Endothelial cell of umbilical vein (primary cell): ENCODE measurements at regions of chr2 and their contacts with region 1.

Region 1: DNA sequence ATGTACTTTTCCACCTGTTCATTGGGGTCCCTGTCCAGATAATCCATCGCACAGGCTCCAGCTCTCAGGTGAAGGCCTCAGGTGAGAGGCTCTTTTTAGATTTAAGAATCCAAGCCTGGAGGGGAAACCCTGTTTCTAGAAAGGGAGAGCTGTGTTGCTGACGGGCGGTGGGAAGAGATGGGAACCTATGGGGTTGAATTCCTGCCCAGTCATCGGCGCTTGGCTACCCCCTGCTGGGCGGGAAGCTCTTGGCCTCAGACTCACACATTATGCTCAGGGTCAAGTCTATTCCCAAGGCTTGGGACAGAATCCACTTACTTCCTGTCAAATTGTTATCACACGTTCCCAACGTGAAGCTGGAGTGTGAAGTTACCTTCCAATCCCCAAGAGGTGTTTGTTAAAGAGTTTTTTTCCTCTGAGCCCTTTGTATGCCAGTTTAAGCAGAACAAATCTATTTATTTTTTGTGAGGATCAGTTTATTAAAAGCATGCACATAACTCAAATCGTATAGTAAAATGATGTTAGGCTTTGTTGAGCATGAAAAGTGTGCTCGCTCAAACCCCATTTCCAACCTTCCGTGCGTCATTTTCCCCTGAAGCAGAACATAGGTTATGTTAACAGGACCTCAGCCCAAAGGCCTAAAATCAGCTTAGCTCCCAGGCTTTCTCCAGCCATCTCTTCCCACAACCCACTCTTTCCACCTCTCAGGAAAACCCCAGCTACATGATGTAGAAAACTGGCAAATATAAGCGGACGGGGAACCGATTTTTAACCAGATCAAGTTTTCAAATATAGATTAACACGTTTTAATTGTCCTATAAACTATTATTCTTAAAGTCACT is 181.7 kb upstream of the ETAA1 start:
- DNase-seq: peak; percentile 77
- H3K4me3 ChIP-seq: no peak overlapping the region
- H3K27ac ChIP-seq: no peak overlapping the region
- H3K4me1 ChIP-seq: no peaks in the 10 kb centered on the region
- H3K27me3 ChIP-seq: no peaks in the 10 kb centered on the region
- CTCF ChIP-seq: peak; percentile 74 to 85
- POLR2A ChIP-seq: no peak

Region 2: GRCh38 chr2:65640793-65641103 is 1574.7 kb before region 1 on chr2:
- CTCF ChIA-PET with region 1: interaction called, 21 read pairs
- POLR2A ChIA-PET with region 1: no interaction called
- dilution Hi-C with region 1: no loop called
- intact Hi-C with region 1: loop called (anchors 1 kb)
- DNase-seq: no peak
- H3K4me3 ChIP-seq: no peak overlapping the region
- H3K27ac ChIP-seq: no peak overlapping the region
- H3K4me1 ChIP-seq: no peaks in the 10 kb centered on the region
- H3K27me3 ChIP-seq: peaks cover 12 to 15% of the 10 kb centered on the region in 2 experiments
- CTCF ChIP-seq: no peak
- POLR2A ChIP-seq: no peak

Region 3: GRCh38 chr2:66574701-66575624 is 640.5 kb before region 1 on chr2:
- CTCF ChIA-PET with region 1: interaction called, 9 read pairs
- POLR2A ChIA-PET with region 1: no interaction called
- dilution Hi-C with region 1: no loop called
- intact Hi-C with region 1: loop called (anchors 1 kb)
- DNase-seq: peak; percentile 81
- H3K4me3 ChIP-seq: peak overlapping the region; percentile 56 to 92 (median 85)
- H3K27ac ChIP-seq: peak overlapping the region; percentile 74
- H3K4me1 ChIP-seq: peaks cover 18% of the 10 kb centered on the region
- H3K27me3 ChIP-seq: peaks cover 32 to 38% of the 10 kb centered on the region in 2 experiments
- CTCF ChIP-seq: peak; percentile 45 to 60
- POLR2A ChIP-seq: no peak

Region 4: GRCh38 chr2:67476809-67477790 is 261.7 kb after region 1 on chr2:
- CTCF ChIA-PET with region 1: interaction called, 9 read pairs
- POLR2A ChIA-PET with region 1: no interaction called
- dilution Hi-C with region 1: no loop called
- intact Hi-C with region 1: loop called (anchors 5 kb)
- DNase-seq: peak; percentile 68
- H3K4me3 ChIP-seq: no peak overlapping the region
- H3K27ac ChIP-seq: no peak overlapping the region
- H3K4me1 ChIP-seq: no peaks in the 10 kb centered on the region
- H3K27me3 ChIP-seq: no peaks in the 10 kb centered on the region
- CTCF ChIP-seq: peak; percentile 39 to 40
- POLR2A ChIP-seq: no peak

Region 5: GRCh38 chr2:67561457-67561965 is 346.1 kb after region 1 on chr2:
- CTCF ChIA-PET with region 1: no interaction called
- POLR2A ChIA-PET with region 1: no interaction called
- dilution Hi-C with region 1: no loop called
- intact Hi-C with region 1: loop called (anchors 10 kb)
- DNase-seq: peak; percentile 95
- H3K4me3 ChIP-seq: peak overlapping the region in 1 of 3 experiments; percentile 8
- H3K27ac ChIP-seq: peak overlapping the region; percentile 92
- H3K4me1 ChIP-seq: peaks cover 32% of the 10 kb centered on the region
- H3K27me3 ChIP-seq: no peaks in the 10 kb centered on the region
- CTCF ChIP-seq: no peak
- POLR2A ChIP-seq: peak; percentile 42

Region 6: DNA sequence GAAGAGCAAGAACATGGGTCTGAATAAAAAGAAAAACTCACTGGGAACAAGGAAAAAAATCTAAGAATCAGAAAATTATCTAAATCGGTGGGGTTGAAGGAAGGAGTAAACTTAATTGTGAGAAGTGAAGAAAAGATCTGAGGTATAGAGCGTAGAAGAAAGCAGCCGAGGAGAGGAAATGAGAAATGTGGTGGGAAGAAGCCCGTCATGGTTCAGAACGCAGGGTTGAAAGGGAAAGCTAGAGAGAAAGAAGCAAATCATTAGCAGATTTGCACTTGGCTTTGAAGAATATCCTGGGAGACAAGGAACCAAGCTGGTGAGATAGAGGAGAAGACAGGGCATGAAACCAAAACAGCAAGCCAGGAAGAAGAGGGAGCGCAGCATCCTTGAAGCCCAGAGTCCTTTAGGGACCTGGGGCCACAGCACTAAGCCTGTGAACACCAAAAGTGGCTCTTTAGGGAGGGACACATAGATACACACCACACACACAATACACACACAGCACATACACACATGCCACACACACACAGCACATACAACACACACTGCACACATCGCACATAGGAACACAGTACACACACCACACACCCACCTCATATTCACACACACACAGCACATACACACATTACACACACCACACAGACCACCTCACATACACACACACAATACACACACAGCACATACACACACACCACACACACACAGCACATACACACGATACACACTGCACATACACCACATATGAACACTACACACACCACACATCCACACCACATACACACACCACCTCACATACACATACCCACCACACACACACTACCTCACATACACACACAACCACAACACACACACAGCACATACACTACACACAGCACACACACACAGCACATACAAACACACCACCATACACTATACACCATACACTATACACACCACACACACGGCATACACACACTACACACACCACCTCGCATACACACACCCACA is 456.3 kb after region 1 on chr2:
- CTCF ChIA-PET with region 1: no interaction called
- POLR2A ChIA-PET with region 1: no interaction called
- dilution Hi-C with region 1: no loop called
- intact Hi-C with region 1: no loop called
- DNase-seq: no peak
- H3K4me3 ChIP-seq: no peak overlapping the region
- H3K27ac ChIP-seq: no peak overlapping the region
- H3K4me1 ChIP-seq: no peaks in the 10 kb centered on the region
- H3K27me3 ChIP-seq: no peaks in the 10 kb centered on the region
- CTCF ChIP-seq: no peak
- POLR2A ChIP-seq: no peak